K562 (cell line): ENCODE measurements at regions of chr3 and their contacts with region 1.

Region 1: GRCh38 chr3:122356415-122356814 is 26.6 kb downstream of the MIX23 start:
- DNase-seq: peak in 3 of 4 experiments; percentile 16 to 50 (median 39)
- ATAC-seq: peak; percentile 82
- H3K4me3 ChIP-seq: no peak overlapping the region
- H3K27ac ChIP-seq: no peak overlapping the region
- H3K4me1 ChIP-seq: peaks cover 0 to 8% of the 10 kb centered on the region in 2 experiments; a peak in 3 of 5 replicates
- H3K27me3 ChIP-seq: no peaks in the 10 kb centered on the region
- CTCF ChIP-seq: peak; percentile 59 to 68 (median 62)
- EP300 ChIP-seq: no peak
- POLR2A ChIP-seq: no peak
- RAD21 ChIP-seq: peak; percentile 72 to 74

Region 2: DNA sequence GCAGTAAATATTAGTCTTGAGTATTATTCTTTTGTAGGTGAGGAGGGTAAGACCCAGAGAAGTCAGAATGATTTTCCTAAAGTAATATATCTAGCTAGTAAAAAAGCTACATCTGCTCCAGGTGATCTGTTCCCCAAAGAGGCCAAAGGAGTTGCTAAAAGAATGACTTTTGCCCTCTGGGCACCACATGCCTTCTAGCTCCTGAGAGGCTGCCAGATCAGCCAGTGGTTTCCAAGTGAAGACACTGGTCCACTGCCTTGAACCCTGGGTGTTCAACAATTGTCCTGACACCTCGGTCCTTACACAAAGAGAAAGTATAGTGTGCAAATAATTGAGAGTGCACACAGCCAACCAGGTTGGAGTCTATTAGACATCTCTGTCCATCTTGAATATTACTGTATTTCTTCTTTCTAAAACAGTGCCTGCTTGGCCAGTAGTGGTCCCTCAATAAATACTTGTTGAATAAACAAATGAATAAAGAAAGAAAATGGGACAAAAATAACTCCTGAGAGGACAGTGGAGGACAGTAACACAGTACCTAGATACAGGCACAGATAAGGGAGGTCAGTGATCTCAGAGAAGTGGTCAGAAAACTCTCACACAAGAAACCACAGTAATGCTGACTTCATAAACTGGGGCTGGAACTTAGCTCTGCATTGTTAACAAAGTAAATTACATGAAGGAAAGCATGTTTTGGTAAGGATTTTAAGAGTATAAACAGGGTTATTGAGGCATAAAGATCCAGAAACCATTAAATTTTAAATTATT is 88.0 kb before region 1 on chr3:
- CTCF ChIA-PET with region 1: no interaction called
- POLR2A ChIA-PET with region 1: interaction called, 3 read pairs
- in situ Hi-C with region 1: no loop called
- intact Hi-C with region 1: loop called (anchors 5 kb)
- DNase-seq: no peak
- ATAC-seq: no peak
- H3K4me3 ChIP-seq: no peak overlapping the region
- H3K27ac ChIP-seq: no peak overlapping the region
- H3K4me1 ChIP-seq: no peaks in the 10 kb centered on the region
- H3K27me3 ChIP-seq: no peaks in the 10 kb centered on the region
- CTCF ChIP-seq: no peak
- EP300 ChIP-seq: no peak
- POLR2A ChIP-seq: no peak
- RAD21 ChIP-seq: no peak

Region 3: GRCh38 chr3:122305818-122306621 is 50.4 kb before region 1 on chr3:
- CTCF ChIA-PET with region 1: no interaction called
- POLR2A ChIA-PET with region 1: no interaction called
- in situ Hi-C with region 1: no loop called
- intact Hi-C with region 1: loop called (anchors 5 kb)
- DNase-seq: peak in 1 of 4 experiments; percentile 4
- ATAC-seq: peak; percentile 61; the same call in 2 of the 3 replicates
- H3K4me3 ChIP-seq: no peak overlapping the region
- H3K27ac ChIP-seq: no peak overlapping the region
- H3K4me1 ChIP-seq: no peaks in the 10 kb centered on the region
- H3K27me3 ChIP-seq: no peaks in the 10 kb centered on the region; a peak in 1 of 5 replicates
- CTCF ChIP-seq: peak in 2 of 3 experiments; percentile 12 to 47; a peak in 2 of 6 replicates
- EP300 ChIP-seq: no peak
- POLR2A ChIP-seq: no peak
- RAD21 ChIP-seq: peak; percentile 7 to 47; a peak in 2 of 4 replicates

Region 4: DNA sequence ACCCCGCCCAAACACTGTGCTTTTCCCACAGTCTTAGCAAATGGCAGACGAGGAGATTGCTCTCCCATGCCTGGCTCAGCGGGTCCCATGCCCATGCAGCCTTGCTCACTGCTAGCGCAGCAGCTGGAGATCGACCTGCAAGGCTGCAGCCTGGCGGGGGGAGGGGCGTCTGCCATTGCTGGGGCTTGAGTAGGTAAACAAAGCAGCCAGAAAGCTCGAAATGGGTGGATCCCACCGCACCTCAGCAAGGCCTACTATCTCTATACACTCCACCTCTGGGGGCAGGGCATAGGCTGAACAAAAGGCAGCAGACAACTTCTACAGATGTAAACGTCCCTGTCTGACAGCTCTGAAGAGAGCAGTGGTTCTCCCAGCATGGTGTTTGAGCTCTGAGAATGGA is 86.7 kb after region 1 on chr3:
- CTCF ChIA-PET with region 1: no interaction called
- POLR2A ChIA-PET with region 1: no interaction called
- in situ Hi-C with region 1: no loop called
- intact Hi-C with region 1: no loop called
- DNase-seq: peak in 1 of 4 experiments; percentile 6
- ATAC-seq: no peak
- H3K4me3 ChIP-seq: no peak overlapping the region
- H3K27ac ChIP-seq: no peak overlapping the region
- H3K4me1 ChIP-seq: 0 out of 5 replicates have a peak, but pooled peaks cover 0 to 3% of the 10 kb centered on the region in 2 experiments
- H3K27me3 ChIP-seq: no peaks in the 10 kb centered on the region
- CTCF ChIP-seq: no peak
- EP300 ChIP-seq: no peak
- POLR2A ChIP-seq: no peak
- RAD21 ChIP-seq: no peak